Breast epithelium (tissue), 4 donors: ENCODE measurements at regions of chr21 and their contacts with region 1.

Region 1: GRCh38 chr21:44522456-44523204 is 17.4 kb downstream of the KRTAP10-1 start:
- DNase-seq: peak in 1 of 2 donors; percentile 40
- H3K4me3 ChIP-seq: no peak overlapping the region
- H3K27ac ChIP-seq: no peak overlapping the region
- H3K4me1 ChIP-seq: no peaks in the 10 kb centered on the region
- H3K27me3 ChIP-seq: peaks cover 0 to 13% of the 10 kb centered on the region in 2 donors
- CTCF ChIP-seq: no peak
- POLR2A ChIP-seq: no peak

Region 2: GRCh38 chr21:44677881-44678280 is 155.3 kb after region 1 on chr21:
- intact Hi-C with region 1: loop called (anchors 10 kb)
- DNase-seq: no peak
- H3K4me3 ChIP-seq: no peak overlapping the region
- H3K27ac ChIP-seq: no peak overlapping the region
- H3K4me1 ChIP-seq: no peaks in the 10 kb centered on the region
- H3K27me3 ChIP-seq: no peaks in the 10 kb centered on the region
- CTCF ChIP-seq: no peak
- POLR2A ChIP-seq: no peak

Region 3: GRCh38 chr21:44911389-44912157 is 388.9 kb after region 1 on chr21:
- intact Hi-C with region 1: no loop called
- DNase-seq: peak; percentile 86 to 89
- H3K4me3 ChIP-seq: peak overlapping the region in 1 of 3 donors; percentile 32
- H3K27ac ChIP-seq: peak overlapping the region; percentile 65 to 84
- H3K4me1 ChIP-seq: peaks cover 0 to 8% of the 10 kb centered on the region in 2 donors
- H3K27me3 ChIP-seq: no peaks in the 10 kb centered on the region
- CTCF ChIP-seq: peak; percentile 51 to 70 (median 64)
- POLR2A ChIP-seq: no peak